ENCODE measurements at regions of chr19 and their contacts with region 1.

Region 1: DNA sequence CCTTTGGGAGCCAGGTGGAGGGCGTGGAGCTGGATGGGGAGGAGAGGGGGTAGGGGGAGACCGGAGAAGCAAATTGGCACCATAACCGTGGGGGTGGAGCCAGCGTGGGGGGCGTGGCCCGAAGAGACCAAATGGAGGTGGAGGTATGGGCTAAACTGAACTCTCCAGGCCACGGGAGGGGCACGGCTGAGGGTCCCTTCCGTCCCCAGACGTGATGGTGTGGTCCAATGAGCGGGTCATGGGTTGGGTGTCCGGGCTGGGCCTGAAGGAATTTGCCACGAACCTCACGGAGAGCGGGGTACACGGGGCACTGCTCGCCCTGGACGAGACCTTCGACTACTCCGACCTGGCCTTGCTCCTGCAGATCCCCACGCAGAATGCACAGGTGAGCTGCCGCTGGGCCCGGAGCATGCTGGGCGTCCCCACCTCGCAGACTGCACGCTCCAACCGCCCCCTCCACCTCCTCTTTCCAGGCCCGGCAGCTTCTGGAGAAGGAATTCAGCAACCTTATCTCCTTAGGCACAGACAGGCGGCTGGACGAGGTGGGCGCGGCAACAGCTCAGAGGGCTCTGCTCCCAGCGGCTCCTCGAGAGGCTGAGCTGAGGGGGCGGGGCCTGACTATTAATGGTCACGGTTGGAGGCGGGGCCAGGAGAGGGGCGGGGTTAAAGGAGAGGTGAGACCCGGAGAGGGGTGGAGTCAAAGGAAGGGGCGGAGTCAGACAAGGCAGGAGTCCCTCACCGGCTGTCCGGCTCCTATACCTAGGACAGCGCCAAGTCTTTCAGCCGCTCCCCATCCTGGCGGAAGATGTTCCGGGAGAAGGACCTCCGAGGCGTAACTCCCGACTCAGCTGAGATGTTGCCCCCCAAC is 6.2 kb downstream of the HRC start:
- DNase-seq: peak; percentile 75 to 96 (median 92)
- H3K4me3 ChIP-seq: peak overlapping the region; percentile 48 to 99 (median 82)
- H3K27ac ChIP-seq: peak overlapping the region in 54 of 59 donors; percentile 21 to 95 (median 83)
- H3K27me3 ChIP-seq: no peaks in the 10 kb centered on the region
- CTCF ChIP-seq: no peak

Region 2: DNA sequence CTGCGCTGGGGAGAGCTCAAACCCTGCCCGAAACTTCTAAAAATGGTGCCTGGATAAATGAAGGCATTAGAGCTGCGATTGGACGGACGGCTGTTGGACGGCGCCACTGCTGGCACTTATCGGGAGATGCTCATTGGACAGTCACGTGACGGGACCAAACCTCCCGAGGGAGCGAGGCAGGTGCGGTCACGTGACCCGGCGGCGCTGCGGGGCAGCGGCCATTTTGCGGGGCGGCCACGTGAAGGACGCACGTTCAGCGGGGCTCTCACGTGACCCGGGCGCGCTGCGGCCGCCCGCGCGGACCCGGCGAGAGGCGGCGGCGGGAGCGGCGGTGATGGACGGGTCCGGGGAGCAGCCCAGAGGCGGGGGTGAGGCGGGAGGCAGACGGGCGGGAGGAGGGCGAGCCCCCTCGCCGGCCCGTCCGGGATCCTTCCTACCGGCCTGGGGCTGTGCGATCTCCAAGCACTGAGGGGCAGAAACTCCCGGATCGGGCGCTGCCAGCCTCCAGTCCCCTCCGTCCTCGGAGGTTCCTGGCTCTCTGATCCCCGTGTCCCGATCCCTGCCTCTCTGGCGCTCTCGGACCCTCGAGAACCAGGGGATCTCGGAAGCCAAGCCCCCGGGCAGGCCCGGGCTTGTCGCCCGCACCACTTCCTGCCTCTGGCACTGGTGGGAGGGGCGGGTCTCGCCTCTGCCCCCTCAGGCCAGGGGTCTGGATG is 194.3 kb before region 1 on chr19 and contains the start of gene BAX:
- intact Hi-C with region 1: no loop called
- DNase-seq: peak; percentile 94 to 99 (median 96)
- H3K4me3 ChIP-seq: peak within 1 kb of the TSS; percentile 68 to 100 (median 97)
- H3K27ac ChIP-seq: peak within 1 kb of the TSS; percentile 74 to 98 (median 93)
- H3K27me3 ChIP-seq: no peaks in the 10 kb centered on the region
- CTCF ChIP-seq: peak in 43 of 56 donors; percentile 10 to 59 (median 36)
- total RNA-seq, gene BAX: 24.4 to 60.6 (median 39.2) TPM

Region 3: GRCh38 chr19:49085020-49085867 is 63.8 kb before region 1 on chr19 and contains the start of gene SNRNP70:
- intact Hi-C with region 1: no loop called
- DNase-seq: peak; percentile 96 to 98 (median 97)
- H3K4me3 ChIP-seq: peak within 1 kb of the TSS; percentile 60 to 100 (median 95)
- H3K27ac ChIP-seq: peak within 1 kb of the TSS; percentile 66 to 98 (median 93)
- H3K27me3 ChIP-seq: no peaks in the 10 kb centered on the region
- CTCF ChIP-seq: peak in 33 of 56 donors; percentile 3 to 63 (median 23)
- total RNA-seq, gene SNRNP70: 217 to 495 (median 342) TPM

Region 4: GRCh38 chr19:49097455-49098288 is 51.3 kb before region 1 on chr19:
- intact Hi-C with region 1: loop called (anchors 2 to 5 kb)
- DNase-seq: peak in 9 of 10 donors; percentile 52 to 78 (median 74)
- H3K4me3 ChIP-seq: peak overlapping the region in 1 of 59 donors; percentile 22
- H3K27ac ChIP-seq: peak overlapping the region in 3 of 59 donors; percentile 13 to 48 (median 14)
- H3K27me3 ChIP-seq: no peaks in the 10 kb centered on the region
- CTCF ChIP-seq: peak; percentile 91 to 100 (median 99)

Region 5: DNA sequence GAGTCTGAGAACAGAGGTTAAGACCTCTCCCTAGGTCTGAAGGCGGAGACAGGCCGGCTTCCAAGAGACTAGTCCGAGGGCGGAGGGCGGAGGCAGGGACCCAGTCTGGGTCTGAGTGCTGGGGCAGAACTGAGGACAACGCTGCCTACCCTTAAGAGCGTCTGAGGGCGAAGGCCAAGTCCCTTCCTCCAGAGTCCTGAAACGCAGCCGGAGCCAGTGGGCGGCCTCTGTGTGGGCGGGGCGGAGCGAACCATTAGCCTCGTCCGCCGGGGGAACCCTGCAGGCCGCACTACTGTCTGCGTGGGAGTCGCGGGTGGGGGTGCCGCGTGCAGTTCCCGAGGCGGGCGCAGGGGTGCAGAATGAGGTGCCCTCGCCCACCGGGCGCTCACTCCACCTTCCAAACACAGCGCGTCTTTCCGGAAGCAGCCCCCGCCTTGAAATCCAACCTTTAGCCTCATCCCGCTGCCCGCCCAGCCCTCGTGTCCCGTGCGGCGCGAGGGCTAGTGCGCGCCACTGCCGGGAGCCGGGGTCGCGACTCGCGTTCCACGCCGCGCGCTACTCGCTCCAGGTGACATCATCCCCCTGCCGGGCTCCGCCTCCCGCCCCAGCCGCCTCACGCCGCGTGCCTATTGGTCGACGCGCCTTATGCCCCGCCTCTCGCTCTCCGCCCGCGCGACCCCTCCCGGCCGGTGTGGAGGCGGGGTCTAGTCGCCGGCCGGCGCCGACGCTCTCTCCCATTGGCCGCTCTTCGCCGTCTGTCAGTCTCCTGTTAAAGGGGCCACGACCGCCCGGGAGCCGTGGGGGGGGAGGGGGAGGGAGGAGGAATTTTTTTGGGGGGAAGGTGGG is 30.2 kb before region 1 on chr19 and contains the start of gene C19orf73:
- intact Hi-C with region 1: loop called (anchors 5 kb)
- DNase-seq: peak; percentile 90 to 99 (median 96)
- H3K4me3 ChIP-seq: peak within 1 kb of the TSS; percentile 56 to 93 (median 78)
- H3K27ac ChIP-seq: peak within 1 kb of the TSS; percentile 78 to 99 (median 97)
- H3K27me3 ChIP-seq: no peaks in the 10 kb centered on the region
- CTCF ChIP-seq: peak in 29 of 56 donors; percentile 1 to 58 (median 24)
- total RNA-seq, gene C19orf73: 1.5 to 6.6 (median 3.2) TPM in 119 of 120 experiments, not detected in the other

Region 6: DNA sequence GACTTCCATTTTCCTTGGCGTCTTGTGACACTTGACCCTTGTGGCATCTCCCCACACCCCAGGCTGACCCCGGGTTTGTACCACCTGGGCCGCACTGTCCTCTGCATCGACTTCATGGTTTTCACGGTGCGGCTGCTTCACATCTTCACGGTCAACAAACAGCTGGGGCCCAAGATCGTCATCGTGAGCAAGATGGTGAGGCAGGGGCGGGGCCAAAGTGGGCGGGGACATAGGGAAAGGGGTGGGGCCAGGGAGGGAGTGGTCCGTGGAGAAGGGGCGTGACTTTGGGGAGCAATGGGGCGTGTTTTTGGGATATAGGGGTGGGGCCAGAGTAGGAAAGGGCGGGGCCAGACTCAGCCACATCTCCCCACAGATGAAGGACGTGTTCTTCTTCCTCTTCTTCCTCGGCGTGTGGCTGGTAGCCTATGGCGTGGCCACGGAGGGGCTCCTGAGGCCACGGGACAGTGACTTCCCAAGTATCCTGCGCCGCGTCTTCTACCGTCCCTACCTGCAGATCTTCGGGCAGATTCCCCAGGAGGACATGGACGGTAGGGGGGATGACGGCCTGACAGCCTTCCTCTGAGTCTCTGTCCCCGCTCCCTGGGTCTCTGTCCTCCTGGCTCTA is 51.3 kb after region 1 on chr19:
- intact Hi-C with region 1: loop called in 1 of 2 experiments (anchors 5 kb)
- DNase-seq: no peak
- H3K4me3 ChIP-seq: no peak overlapping the region
- H3K27ac ChIP-seq: no peak overlapping the region
- H3K27me3 ChIP-seq: no peaks in the 10 kb centered on the region
- CTCF ChIP-seq: no peak

Region 7: DNA sequence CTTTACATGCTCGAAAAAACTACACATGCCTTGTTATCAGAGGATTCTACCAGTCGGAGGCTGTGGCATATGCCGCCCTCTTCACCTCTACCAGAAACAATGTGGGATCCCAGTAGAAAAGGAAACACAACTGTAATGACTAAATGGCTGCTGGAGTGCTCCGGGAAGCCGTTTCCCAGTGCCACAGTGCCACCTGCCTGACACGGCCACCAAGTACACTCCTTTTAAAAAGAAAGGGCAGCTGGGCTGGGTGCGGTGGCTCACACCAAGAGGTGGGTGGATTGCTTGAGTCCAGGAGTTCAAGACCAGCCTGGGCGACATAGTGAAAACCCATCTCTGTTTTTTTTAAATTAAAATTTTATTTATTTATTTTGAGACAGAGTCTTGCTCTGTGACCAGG is 75.8 kb after region 1 on chr19:
- intact Hi-C with region 1: no loop called
- DNase-seq: peak in 3 of 10 donors; percentile 25 to 53 (median 52)
- H3K4me3 ChIP-seq: no peak overlapping the region
- H3K27ac ChIP-seq: no peak overlapping the region
- H3K27me3 ChIP-seq: peaks cover 0 to 8% (median 0%) of the 10 kb centered on the region in 45 donors
- CTCF ChIP-seq: peak in 41 of 56 donors; percentile 9 to 55 (median 29)